CD8-positive, alpha-beta T cell (primary cell): ENCODE measurements at regions of chr1 and their contacts with region 1.

Region 1: DNA sequence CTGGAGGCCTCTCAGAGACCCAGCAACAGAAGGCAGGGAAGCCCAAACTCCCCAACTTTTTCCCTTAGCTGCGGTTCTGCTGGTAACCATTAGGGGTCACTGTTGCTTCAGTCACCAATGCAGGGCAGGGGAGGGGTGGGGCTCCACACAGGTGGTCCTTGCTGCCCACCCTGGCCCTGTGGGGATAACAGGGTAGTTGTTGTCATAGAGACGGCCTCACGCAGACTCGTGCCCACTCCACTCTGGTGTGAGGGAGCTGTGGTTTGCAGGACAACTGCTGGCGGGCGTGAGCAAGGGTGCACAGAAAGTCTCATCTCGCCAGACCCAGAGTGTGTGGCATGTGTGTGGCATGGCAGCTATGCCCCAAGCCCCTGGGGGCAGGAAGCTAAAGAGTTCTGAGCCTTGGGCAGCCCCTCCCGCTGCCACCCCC is 19.9 kb downstream of the INSRR start:
- DNase-seq: peak in 8 of 9 experiments; percentile 33 to 72 (median 54)
- ATAC-seq: peak; percentile 88
- H3K4me3 ChIP-seq: no peak overlapping the region
- H3K4me3 Mint-ChIP-seq: no peak overlapping the region
- H3K27ac ChIP-seq: no peak overlapping the region
- H3K27ac Mint-ChIP-seq: no peak overlapping the region
- H3K4me1 ChIP-seq: no peaks in the 10 kb centered on the region
- H3K4me1 Mint-ChIP-seq: peaks cover 2% of the 10 kb centered on the region
- H3K27me3 ChIP-seq: peaks cover 0 to 7% of the 10 kb centered on the region in 2 experiments
- H3K27me3 Mint-ChIP-seq: peaks cover 46% of the 10 kb centered on the region
- CTCF ChIP-seq: peak; percentile 88

Region 2: DNA sequence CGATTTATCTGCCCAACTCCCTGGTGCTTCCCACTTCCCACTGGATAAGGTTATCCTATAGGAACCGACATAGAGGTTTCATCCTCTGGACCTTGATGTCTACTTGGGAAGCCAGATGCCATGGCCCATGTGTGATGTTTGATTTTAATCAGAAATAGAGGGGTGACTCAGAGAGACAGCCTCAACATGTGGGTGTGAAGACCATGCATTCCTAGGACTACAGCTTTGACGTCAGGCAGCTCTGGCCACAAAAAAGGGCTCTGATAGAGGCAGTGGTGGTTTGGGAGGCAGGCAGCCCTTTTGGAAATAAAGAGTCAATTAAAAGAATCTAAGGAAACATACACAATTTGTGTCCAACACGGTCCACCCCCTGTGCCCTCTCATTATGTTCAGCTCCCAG is 17.2 kb before region 1 on chr1:
- CTCF ChIA-PET with region 1: interaction called, 28 read pairs
- POLR2A ChIA-PET with region 1: no interaction called
- intact Hi-C with region 1: no loop called
- DNase-seq: peak in 4 of 9 experiments; percentile 25 to 58 (median 46)
- ATAC-seq: peak; percentile 44
- H3K4me3 ChIP-seq: no peak overlapping the region
- H3K4me3 Mint-ChIP-seq: no peak overlapping the region
- H3K27ac ChIP-seq: no peak overlapping the region
- H3K27ac Mint-ChIP-seq: no peak overlapping the region
- H3K4me1 ChIP-seq: peaks cover 10% of the 10 kb centered on the region
- H3K4me1 Mint-ChIP-seq: peaks cover 16% of the 10 kb centered on the region
- H3K27me3 ChIP-seq: no peaks in the 10 kb centered on the region
- H3K27me3 Mint-ChIP-seq: no peaks in the 10 kb centered on the region
- CTCF ChIP-seq: no peak

Region 3: DNA sequence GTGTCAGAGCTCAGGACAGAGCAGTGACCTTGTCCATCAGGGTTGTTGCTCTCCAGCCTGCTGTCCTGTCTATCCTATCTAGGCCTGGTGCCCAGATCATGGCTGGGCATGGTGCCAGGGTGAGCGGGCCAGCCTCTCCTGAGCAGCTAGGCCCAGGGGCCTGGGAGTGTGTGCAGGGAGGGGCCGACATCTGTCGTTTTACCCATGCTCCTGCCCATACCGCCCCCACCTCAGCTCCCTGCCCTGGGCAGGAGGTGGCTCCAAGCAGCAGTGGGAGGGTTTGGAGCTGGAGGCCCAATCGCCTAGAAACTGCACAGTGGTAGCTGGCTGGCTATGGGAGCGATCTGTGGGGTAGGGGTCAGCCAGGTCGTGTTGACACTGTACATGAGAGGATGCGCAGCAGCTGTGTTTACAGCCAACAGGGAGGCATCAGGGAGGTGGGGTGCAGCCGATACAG is 13.4 kb after region 1 on chr1:
- CTCF ChIA-PET with region 1: interaction called, 227 read pairs
- POLR2A ChIA-PET with region 1: interaction called, 4 read pairs
- intact Hi-C with region 1: no loop called
- DNase-seq: no peak
- ATAC-seq: no peak
- H3K4me3 ChIP-seq: no peak overlapping the region
- H3K4me3 Mint-ChIP-seq: no peak overlapping the region
- H3K27ac ChIP-seq: no peak overlapping the region
- H3K27ac Mint-ChIP-seq: no peak overlapping the region
- H3K4me1 ChIP-seq: peaks cover 18% of the 10 kb centered on the region
- H3K4me1 Mint-ChIP-seq: peaks cover 13% of the 10 kb centered on the region
- H3K27me3 ChIP-seq: no peaks in the 10 kb centered on the region
- H3K27me3 Mint-ChIP-seq: no peaks in the 10 kb centered on the region
- CTCF ChIP-seq: no peak

Region 4: GRCh38 chr1:156927215-156928042 is 88.4 kb after region 1 on chr1:
- CTCF ChIA-PET with region 1: interaction called, 6 read pairs
- POLR2A ChIA-PET with region 1: no interaction called
- intact Hi-C with region 1: loop called (anchors 1 to 2 kb)
- DNase-seq: peak; percentile 25 to 74 (median 61)
- ATAC-seq: peak; percentile 80
- H3K4me3 ChIP-seq: peak overlapping the region in 1 of 2 experiments; percentile 20
- H3K4me3 Mint-ChIP-seq: no peak overlapping the region
- H3K27ac ChIP-seq: no peak overlapping the region
- H3K27ac Mint-ChIP-seq: no peak overlapping the region
- H3K4me1 ChIP-seq: peaks cover 16% of the 10 kb centered on the region
- H3K4me1 Mint-ChIP-seq: peaks cover 22% of the 10 kb centered on the region
- H3K27me3 ChIP-seq: peaks cover 37 to 43% of the 10 kb centered on the region in 2 experiments
- H3K27me3 Mint-ChIP-seq: peaks cover 67% of the 10 kb centered on the region
- CTCF ChIP-seq: no peak

Region 5: GRCh38 chr1:157124855-157125254 is 285.9 kb after region 1 on chr1:
- CTCF ChIA-PET with region 1: no interaction called
- POLR2A ChIA-PET with region 1: no interaction called
- intact Hi-C with region 1: no loop called
- DNase-seq: peak in 2 of 9 experiments; percentile 14 to 33
- ATAC-seq: no peak
- H3K4me3 ChIP-seq: no peak overlapping the region
- H3K4me3 Mint-ChIP-seq: no peak overlapping the region
- H3K27ac ChIP-seq: no peak overlapping the region
- H3K27ac Mint-ChIP-seq: no peak overlapping the region
- H3K4me1 ChIP-seq: no peaks in the 10 kb centered on the region
- H3K4me1 Mint-ChIP-seq: peaks cover 35% of the 10 kb centered on the region
- H3K27me3 ChIP-seq: no peaks in the 10 kb centered on the region
- H3K27me3 Mint-ChIP-seq: no peaks in the 10 kb centered on the region
- CTCF ChIP-seq: no peak

Region 6: GRCh38 chr1:157156058-157156541 is 317.1 kb after region 1 on chr1:
- CTCF ChIA-PET with region 1: interaction called, 8 read pairs
- POLR2A ChIA-PET with region 1: no interaction called
- intact Hi-C with region 1: loop called in 1 of 2 experiments (anchors 5 kb)
- DNase-seq: peak; percentile 58 to 88 (median 77)
- ATAC-seq: peak; percentile 59
- H3K4me3 ChIP-seq: no peak overlapping the region
- H3K4me3 Mint-ChIP-seq: peak overlapping the region; percentile 46
- H3K27ac ChIP-seq: no peak overlapping the region
- H3K27ac Mint-ChIP-seq: peak overlapping the region; percentile 24
- H3K4me1 ChIP-seq: peaks cover 18% of the 10 kb centered on the region
- H3K4me1 Mint-ChIP-seq: peaks cover 17% of the 10 kb centered on the region
- H3K27me3 ChIP-seq: peaks cover 0 to 4% of the 10 kb centered on the region in 2 experiments
- H3K27me3 Mint-ChIP-seq: peaks cover 12% of the 10 kb centered on the region
- CTCF ChIP-seq: peak; percentile 92